Heart left ventricle (tissue), 16 donors: ENCODE measurements at regions of chr9 and their contacts with region 1.

Region 1: DNA sequence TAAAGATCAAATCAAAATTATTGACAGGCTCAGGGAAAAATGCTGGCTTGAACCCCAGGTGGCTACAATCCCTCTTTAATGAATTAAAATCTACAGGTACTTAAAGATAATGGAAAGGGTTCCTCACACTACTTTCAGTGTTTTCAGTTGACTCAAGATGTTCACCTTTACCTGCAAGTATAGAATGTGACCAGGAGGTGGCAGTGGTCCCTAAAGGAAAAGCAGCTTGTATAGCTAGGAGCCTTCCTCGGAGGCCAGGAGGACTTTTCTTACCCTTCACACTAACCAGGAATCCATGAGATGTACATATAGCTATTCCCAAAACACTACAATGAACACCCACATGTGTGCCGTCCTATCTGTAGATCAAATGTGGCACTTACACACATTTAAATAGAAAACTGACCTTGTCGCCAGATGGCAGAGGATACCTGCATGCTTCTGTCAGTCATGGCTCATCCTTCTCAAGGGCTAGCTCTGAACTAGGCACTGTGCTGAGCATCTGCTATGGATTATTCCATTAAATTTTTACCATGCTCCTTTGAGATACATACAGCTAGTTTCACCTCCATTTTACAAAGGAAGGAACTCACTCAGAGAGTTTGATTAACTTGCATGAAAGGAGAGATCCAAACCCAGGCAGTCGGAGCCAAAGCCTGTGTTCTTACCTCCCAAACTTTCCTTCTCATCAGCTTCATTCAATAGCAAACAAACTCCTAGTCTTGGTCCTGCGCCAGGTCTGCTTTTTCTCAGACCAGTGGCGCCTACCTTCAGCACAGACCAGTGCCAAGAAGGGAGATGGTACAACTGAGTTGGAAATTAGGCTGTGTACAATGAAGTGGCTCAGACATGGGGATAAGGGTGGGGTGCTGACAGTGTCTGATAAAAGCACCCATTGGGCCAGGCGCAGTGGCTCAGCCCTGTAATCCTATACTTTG is 24.5 kb downstream of the C9orf152 start:
- DNase-seq: peak in 4 of 5 donors; percentile 43 to 53 (median 48)
- ATAC-seq: peak in 3 of 4 donors; percentile 59 to 68 (median 66)
- H3K4me3 ChIP-seq: no peak overlapping the region
- H3K27ac ChIP-seq: no peak overlapping the region
- H3K4me1 ChIP-seq: peaks cover 0 to 9% (median 0%) of the 10 kb centered on the region in 12 donors
- H3K27me3 ChIP-seq: no peaks in the 10 kb centered on the region
- CTCF ChIP-seq: peak; percentile 59 to 77 (median 68)
- POLR2A ChIP-seq: no peak

Region 2: GRCh38 chr9:110007477-110008270 is 175.8 kb before region 1 on chr9:
- intact Hi-C with region 1: no loop called
- DNase-seq: no peak
- ATAC-seq: no peak
- H3K4me3 ChIP-seq: no peak overlapping the region
- H3K27ac ChIP-seq: no peak overlapping the region
- H3K4me1 ChIP-seq: no peaks in the 10 kb centered on the region
- H3K27me3 ChIP-seq: no peaks in the 10 kb centered on the region
- CTCF ChIP-seq: no peak
- POLR2A ChIP-seq: no peak

Region 3: DNA sequence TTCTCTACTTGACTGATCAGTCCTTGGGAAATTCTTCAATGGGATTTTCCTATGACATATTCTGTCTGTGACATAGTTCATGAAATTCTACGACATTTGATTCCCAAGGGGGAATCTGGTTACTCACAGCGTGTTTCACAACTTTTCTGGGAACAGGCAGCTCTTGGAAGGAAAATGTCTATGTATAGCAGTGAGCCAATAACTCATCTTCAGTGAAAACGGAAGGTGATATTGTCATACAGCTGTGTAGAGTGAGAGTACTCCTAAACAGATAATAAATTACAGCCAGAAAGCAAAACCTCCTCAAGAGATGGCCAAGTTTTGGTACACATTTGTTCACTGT is 67.0 kb before region 1 on chr9:
- intact Hi-C with region 1: no loop called
- DNase-seq: no peak
- ATAC-seq: peak in 2 of 4 donors; percentile 27 to 47
- H3K4me3 ChIP-seq: no peak overlapping the region
- H3K27ac ChIP-seq: peak overlapping the region in 6 of 12 donors; percentile 14 to 70 (median 36)
- H3K4me1 ChIP-seq: peaks cover 0 to 65% (median 42%) of the 10 kb centered on the region in 12 donors
- H3K27me3 ChIP-seq: no peaks in the 10 kb centered on the region
- CTCF ChIP-seq: no peak
- POLR2A ChIP-seq: no peak

Region 4: DNA sequence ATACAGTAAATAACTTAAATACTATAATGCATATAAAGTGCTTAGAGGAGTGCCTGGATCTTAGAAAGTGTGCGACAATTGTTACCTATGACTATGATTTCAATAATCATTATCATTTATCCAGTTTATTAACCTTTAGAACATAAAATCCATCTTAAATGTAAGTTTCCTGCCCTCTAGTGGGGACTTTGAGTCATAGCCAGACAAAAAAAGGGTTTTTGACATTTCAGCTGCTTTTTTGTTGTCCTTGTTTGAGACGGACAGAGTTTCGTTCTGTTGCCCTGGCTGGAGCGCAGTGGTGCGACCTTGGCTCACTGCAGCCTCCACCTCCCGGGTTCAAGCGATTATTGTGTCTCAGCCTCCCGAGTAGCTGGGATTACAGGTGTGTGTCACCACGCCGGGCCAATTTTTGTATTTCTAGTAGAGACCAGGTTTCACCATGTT is 34.2 kb after region 1 on chr9:
- intact Hi-C with region 1: loop called in 8 of 10 experiments (anchors 1 to 10 kb)
- DNase-seq: no peak
- ATAC-seq: no peak
- H3K4me3 ChIP-seq: no peak overlapping the region
- H3K27ac ChIP-seq: no peak overlapping the region
- H3K4me1 ChIP-seq: peaks cover 0 to 5% (median 0%) of the 10 kb centered on the region in 12 donors
- H3K27me3 ChIP-seq: no peaks in the 10 kb centered on the region
- CTCF ChIP-seq: peak; percentile 73 to 90 (median 81)
- POLR2A ChIP-seq: no peak